MCF 10A (cell line): ENCODE measurements at regions of chr4 and their contacts with region 1.

Region 1: GRCh38 chr4:154779362-154779947 is 1.6 kb upstream of the RBM46 start:
- DNase-seq: peak; percentile 57
- H3K4me3 Mint-ChIP-seq: no peak overlapping the region
- H3K27ac Mint-ChIP-seq: no peak overlapping the region
- H3K4me1 Mint-ChIP-seq: no peaks in the 10 kb centered on the region
- H3K27me3 Mint-ChIP-seq: no peaks in the 10 kb centered on the region
- CTCF ChIP-seq: peak; percentile 67

Region 2: GRCh38 chr4:153850533-153851280 is 928.7 kb before region 1 on chr4:
- CTCF ChIA-PET with region 1: no interaction called
- POLR2A ChIA-PET with region 1: no interaction called
- intact Hi-C with region 1: no loop called
- DNase-seq: no peak
- H3K4me3 Mint-ChIP-seq: no peak overlapping the region
- H3K27ac Mint-ChIP-seq: no peak overlapping the region
- H3K4me1 Mint-ChIP-seq: no peaks in the 10 kb centered on the region
- H3K27me3 Mint-ChIP-seq: no peaks in the 10 kb centered on the region
- CTCF ChIP-seq: no peak

Region 3: GRCh38 chr4:154626793-154627484 is 152.5 kb before region 1 on chr4:
- CTCF ChIA-PET with region 1: interaction called, 23 read pairs
- POLR2A ChIA-PET with region 1: no interaction called
- intact Hi-C with region 1: loop called (anchors 1 kb)
- DNase-seq: peak; percentile 83
- H3K4me3 Mint-ChIP-seq: no peak overlapping the region
- H3K27ac Mint-ChIP-seq: no peak overlapping the region
- H3K4me1 Mint-ChIP-seq: no peaks in the 10 kb centered on the region
- H3K27me3 Mint-ChIP-seq: no peaks in the 10 kb centered on the region
- CTCF ChIP-seq: peak; percentile 75

Region 4: GRCh38 chr4:154634058-154634457 is 145.4 kb before region 1 on chr4:
- CTCF ChIA-PET with region 1: interaction called, 86 read pairs
- POLR2A ChIA-PET with region 1: no interaction called
- intact Hi-C with region 1: loop called (anchors 1 kb)
- DNase-seq: no peak
- H3K4me3 Mint-ChIP-seq: no peak overlapping the region
- H3K27ac Mint-ChIP-seq: no peak overlapping the region
- H3K4me1 Mint-ChIP-seq: no peaks in the 10 kb centered on the region
- H3K27me3 Mint-ChIP-seq: no peaks in the 10 kb centered on the region
- CTCF ChIP-seq: no peak

Region 5: DNA sequence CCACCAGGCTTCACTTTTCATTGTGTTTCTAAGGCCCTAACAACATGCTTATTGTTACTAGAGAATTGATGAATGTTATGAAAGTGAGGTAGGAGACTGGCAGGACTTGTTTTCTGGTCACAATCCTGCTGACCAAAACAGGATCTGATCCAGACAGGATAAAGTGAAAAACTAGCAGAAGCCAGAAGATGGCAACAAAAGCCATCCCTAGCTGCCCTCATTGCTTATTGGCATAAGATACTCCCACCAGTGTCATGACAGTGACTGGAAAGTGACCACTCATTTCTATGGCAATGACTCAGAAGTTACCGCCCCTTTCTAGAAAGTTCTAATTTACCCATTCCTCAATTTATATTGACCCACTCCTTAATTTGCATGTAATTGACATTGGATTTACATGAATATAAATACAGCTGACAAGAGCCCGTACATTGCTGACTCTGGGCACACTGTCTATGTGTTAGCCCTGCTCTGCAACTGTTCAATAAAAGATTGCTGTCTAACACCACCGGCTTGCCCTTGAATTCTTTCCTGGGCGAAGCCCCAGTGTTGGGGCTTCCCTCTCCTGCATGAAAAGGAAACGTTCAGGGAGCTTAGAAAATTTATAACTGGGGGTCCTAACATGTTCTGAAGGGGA is 137.0 kb before region 1 on chr4:
- CTCF ChIA-PET with region 1: interaction called, 86 read pairs
- POLR2A ChIA-PET with region 1: interaction called, 5 read pairs
- intact Hi-C with region 1: loop called (anchors 1 kb)
- DNase-seq: no peak
- H3K4me3 Mint-ChIP-seq: no peak overlapping the region
- H3K27ac Mint-ChIP-seq: no peak overlapping the region
- H3K4me1 Mint-ChIP-seq: peaks cover 14% of the 10 kb centered on the region
- H3K27me3 Mint-ChIP-seq: no peaks in the 10 kb centered on the region
- CTCF ChIP-seq: no peak

Region 6: DNA sequence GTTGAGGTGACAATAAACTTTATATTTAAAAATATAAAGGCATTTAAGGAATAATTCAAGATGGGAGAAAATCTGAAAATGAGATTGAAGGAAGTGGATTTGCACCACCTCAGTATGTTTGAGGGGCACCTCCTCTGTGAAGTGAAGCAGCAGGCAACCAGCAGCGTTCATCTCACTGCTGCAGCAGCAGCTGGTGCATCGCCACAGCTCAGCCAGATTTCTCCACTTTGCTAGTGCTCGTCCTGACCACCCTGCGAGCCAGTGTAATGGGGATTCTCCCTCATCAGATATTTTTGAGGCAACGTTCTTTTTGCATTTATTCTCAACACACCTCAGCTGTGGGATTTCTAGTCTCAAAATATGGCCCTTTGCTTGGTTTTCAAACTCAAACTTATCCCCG is 21.7 kb before region 1 on chr4:
- CTCF ChIA-PET with region 1: interaction called, 13 read pairs
- POLR2A ChIA-PET with region 1: interaction called, 3 read pairs
- intact Hi-C with region 1: no loop called
- DNase-seq: no peak
- H3K4me3 Mint-ChIP-seq: no peak overlapping the region
- H3K27ac Mint-ChIP-seq: no peak overlapping the region
- H3K4me1 Mint-ChIP-seq: no peaks in the 10 kb centered on the region
- H3K27me3 Mint-ChIP-seq: no peaks in the 10 kb centered on the region
- CTCF ChIP-seq: no peak

Region 7: GRCh38 chr4:154973244-154974035 is 194.0 kb after region 1 on chr4:
- CTCF ChIA-PET with region 1: no interaction called
- POLR2A ChIA-PET with region 1: no interaction called
- intact Hi-C with region 1: no loop called
- DNase-seq: peak; percentile 24
- H3K4me3 Mint-ChIP-seq: no peak overlapping the region
- H3K27ac Mint-ChIP-seq: peak overlapping the region; percentile 3
- H3K4me1 Mint-ChIP-seq: peaks cover 12% of the 10 kb centered on the region
- H3K27me3 Mint-ChIP-seq: no peaks in the 10 kb centered on the region
- CTCF ChIP-seq: no peak